Heart left ventricle (tissue), 16 donors: ENCODE measurements at regions of chr1 and their contacts with region 1.

Region 1: DNA sequence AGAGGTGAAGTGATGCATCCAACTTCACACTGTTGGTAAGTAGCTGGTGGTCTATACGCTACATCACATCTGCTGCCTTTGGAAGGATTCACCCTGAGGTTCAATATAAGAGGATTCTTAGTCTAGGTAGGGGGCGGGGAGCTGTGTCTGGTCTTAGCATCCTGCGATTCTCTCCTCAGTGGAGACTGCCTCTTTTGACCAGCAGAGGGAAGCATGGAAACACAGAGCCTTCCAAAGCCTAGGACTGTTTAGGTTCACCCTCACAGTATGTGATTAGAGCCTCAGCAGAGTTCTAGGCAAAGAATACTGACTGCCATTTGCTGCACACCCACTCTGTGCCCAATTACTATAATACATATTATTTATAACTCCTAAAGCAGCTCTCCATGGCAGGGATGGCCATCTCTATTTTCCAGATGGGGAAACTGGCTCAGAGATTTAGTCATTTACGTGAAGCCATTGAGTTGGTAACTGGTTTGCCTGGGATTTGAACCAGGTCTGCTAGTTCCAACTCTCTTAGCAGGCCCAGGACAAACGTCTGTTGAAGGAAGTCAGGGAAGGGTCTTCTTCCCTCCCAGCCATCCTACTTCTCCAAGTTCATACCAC is 28.9 kb upstream of the EFCAB14 start:
- DNase-seq: peak in 4 of 5 donors; percentile 21 to 48 (median 34)
- ATAC-seq: peak; percentile 73 to 93 (median 89)
- H3K4me3 ChIP-seq: no peak overlapping the region
- H3K27ac ChIP-seq: no peak overlapping the region
- H3K4me1 ChIP-seq: peaks cover 0 to 2% (median 0%) of the 10 kb centered on the region in 12 donors
- H3K27me3 ChIP-seq: peaks cover 0 to 9% (median 0%) of the 10 kb centered on the region in 9 donors
- CTCF ChIP-seq: peak; percentile 48 to 78 (median 74)
- POLR2A ChIP-seq: no peak

Region 2: DNA sequence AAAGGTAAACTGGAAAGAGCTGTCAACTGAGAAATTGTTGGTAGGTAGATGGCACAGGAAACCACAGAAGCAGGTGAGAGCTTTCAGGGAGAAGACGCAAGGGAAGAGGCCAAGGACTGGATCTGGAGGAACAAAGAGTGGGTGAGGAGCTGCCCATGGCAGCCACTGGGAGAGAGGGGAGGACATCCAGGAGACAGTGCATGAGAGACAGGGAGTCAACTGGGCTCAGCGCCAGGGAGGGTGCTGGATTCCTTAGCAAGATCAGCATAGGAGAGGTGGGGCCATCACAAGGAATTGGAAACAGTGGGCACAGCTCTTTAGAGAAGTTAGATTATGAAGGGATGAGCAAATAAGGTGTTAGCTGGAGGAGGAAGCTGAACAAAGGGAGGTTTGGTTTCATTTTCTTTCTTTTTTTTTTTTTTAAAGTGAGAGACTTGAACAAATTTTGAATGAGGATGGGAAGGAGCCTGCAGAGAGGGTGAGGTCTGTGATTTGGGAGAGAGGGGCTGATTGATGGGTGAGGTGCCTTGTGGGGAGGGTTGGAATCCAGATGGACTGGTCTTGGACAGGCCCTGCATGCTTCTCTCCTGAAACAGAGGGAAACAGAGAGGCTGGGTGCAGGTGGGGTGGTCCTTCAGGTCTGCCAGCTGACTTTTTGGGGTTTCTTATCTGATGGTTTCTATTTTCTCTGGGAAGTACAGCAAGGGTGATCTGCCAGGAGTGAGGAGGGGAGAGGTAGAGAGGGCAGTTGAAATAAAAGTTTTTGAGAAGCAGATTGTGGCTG is 56.4 kb after region 1 on chr1:
- intact Hi-C with region 1: loop called in 1 of 10 experiments (anchors 5 kb)
- DNase-seq: peak in 1 of 5 donors; percentile 46
- ATAC-seq: no peak
- H3K4me3 ChIP-seq: peak overlapping the region in 2 of 12 donors; percentile 54 to 59
- H3K27ac ChIP-seq: peak overlapping the region in 9 of 12 donors; percentile 28 to 95 (median 87)
- H3K4me1 ChIP-seq: peaks cover 6 to 44% (median 35%) of the 10 kb centered on the region in 12 donors
- H3K27me3 ChIP-seq: no peaks in the 10 kb centered on the region
- CTCF ChIP-seq: no peak
- POLR2A ChIP-seq: no peak

Region 3: GRCh38 chr1:46991083-46991923 is 243.5 kb after region 1 on chr1:
- intact Hi-C with region 1: loop called in 9 of 10 experiments (anchors 2 to 10 kb)
- DNase-seq: no peak
- ATAC-seq: no peak
- H3K4me3 ChIP-seq: no peak overlapping the region
- H3K27ac ChIP-seq: no peak overlapping the region
- H3K4me1 ChIP-seq: no peaks in the 10 kb centered on the region
- H3K27me3 ChIP-seq: no peaks in the 10 kb centered on the region
- CTCF ChIP-seq: peak in 9 of 12 donors; percentile 12 to 39 (median 24)
- POLR2A ChIP-seq: no peak

Region 4: GRCh38 chr1:46996659-46997281 is 249.0 kb after region 1 on chr1:
- intact Hi-C with region 1: loop called in 9 of 10 experiments (anchors 2 to 10 kb)
- DNase-seq: no peak
- ATAC-seq: no peak
- H3K4me3 ChIP-seq: no peak overlapping the region
- H3K27ac ChIP-seq: no peak overlapping the region
- H3K4me1 ChIP-seq: no peaks in the 10 kb centered on the region
- H3K27me3 ChIP-seq: no peaks in the 10 kb centered on the region
- CTCF ChIP-seq: no peak
- POLR2A ChIP-seq: no peak